AG04450 (cell line): ENCODE measurements at regions of chr16 and their contacts with region 1.

Region 1: GRCh38 chr16:66275775-66276428 is 90.6 kb upstream of the CDH5 start:
- DNase-seq: no peak
- H3K4me3 ChIP-seq: no peak overlapping the region
- H3K27ac ChIP-seq: no peak overlapping the region
- H3K27me3 ChIP-seq: peaks cover 9% of the 10 kb centered on the region
- CTCF ChIP-seq: peak; percentile 79

Region 2: GRCh38 chr16:66295761-66296520 is 20.0 kb after region 1 on chr16:
- CTCF ChIA-PET with region 1: no interaction called
- POLR2A ChIA-PET with region 1: no interaction called
- DNase-seq: no peak
- H3K4me3 ChIP-seq: no peak overlapping the region
- H3K27ac ChIP-seq: no peak overlapping the region
- H3K27me3 ChIP-seq: peaks cover 39% of the 10 kb centered on the region
- CTCF ChIP-seq: no peak

Region 3: GRCh38 chr16:66315210-66315825 is 39.4 kb after region 1 on chr16:
- CTCF ChIA-PET with region 1: interaction called, 14 read pairs
- POLR2A ChIA-PET with region 1: no interaction called
- DNase-seq: peak; percentile 49
- H3K4me3 ChIP-seq: no peak overlapping the region
- H3K27ac ChIP-seq: no peak overlapping the region
- H3K27me3 ChIP-seq: peaks cover 14% of the 10 kb centered on the region
- CTCF ChIP-seq: peak; percentile 99